Naive thymus-derived CD4-positive, alpha-beta T cell (primary cell): ENCODE measurements at regions of chr10 and their contacts with region 1.

Region 1: DNA sequence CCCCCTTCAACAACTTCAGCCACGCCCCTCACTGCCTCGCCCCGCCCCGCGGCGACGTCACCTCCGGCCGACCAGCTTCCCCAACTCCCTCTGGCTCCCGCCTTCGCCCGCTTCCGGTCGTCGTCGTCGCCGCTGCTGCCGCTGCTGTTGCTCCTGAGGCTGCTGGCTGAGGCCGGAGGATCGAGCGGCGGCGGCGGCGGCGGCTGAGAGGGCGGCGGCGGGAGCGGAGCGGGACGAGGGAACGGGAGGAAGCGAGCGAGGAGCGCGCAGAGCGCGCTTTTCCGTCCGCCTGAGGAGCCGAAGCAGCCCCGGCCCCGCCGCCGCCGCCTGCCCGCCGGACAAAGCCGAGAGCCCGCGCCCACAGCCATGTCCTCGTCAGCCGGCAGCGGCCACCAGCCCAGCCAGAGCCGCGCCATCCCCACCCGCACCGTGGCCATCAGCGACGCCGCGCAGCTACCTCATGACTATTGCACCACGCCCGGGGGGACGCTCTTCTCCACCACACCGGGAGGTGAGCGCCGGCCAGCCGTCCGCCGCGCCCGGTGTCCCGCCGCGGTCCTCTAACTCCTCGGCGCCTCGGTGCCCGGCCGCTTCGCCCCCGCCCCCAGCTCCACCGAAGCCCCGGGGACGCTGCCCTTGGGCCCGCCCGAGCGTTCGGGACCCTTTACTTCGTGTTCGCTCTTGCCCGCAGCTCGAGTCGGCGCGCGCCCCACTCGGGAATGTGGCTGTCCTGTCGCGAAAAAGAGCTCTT is at the start of gene EIF4EBP2:
- DNase-seq: peak; percentile 95 to 100 (median 98)
- ATAC-seq: peak; percentile 98
- H3K4me3 ChIP-seq: peak within 1 kb of the TSS; percentile 82
- H3K4me3 Mint-ChIP-seq: peak within 1 kb of the TSS; percentile 91 to 99 (median 96)
- H3K27ac ChIP-seq: peak within 1 kb of the TSS; percentile 86
- H3K27ac Mint-ChIP-seq: peak within 1 kb of the TSS; percentile 88 to 97 (median 94)
- H3K4me1 ChIP-seq: peaks cover 13 to 24% of the 10 kb centered on the region in 2 donors
- H3K4me1 Mint-ChIP-seq: peaks cover 30 to 53% (median 44%) of the 10 kb centered on the region in 7 donors
- H3K27me3 ChIP-seq: no peaks in the 10 kb centered on the region
- H3K27me3 Mint-ChIP-seq: peaks cover 0 to 3% (median 0%) of the 10 kb centered on the region in 5 donors
- total RNA-seq, gene EIF4EBP2: 33.5 to 52.1 (median 45.2) TPM

Region 2: GRCh38 chr10:69845574-69846292 is 558.5 kb before region 1 on chr10:
- CTCF ChIA-PET with region 1: no interaction called
- POLR2A ChIA-PET with region 1: no interaction called
- intact Hi-C with region 1: no loop called
- DNase-seq: no peak
- ATAC-seq: no peak
- H3K4me3 ChIP-seq: no peak overlapping the region
- H3K4me3 Mint-ChIP-seq: no peak overlapping the region
- H3K27ac ChIP-seq: no peak overlapping the region
- H3K27ac Mint-ChIP-seq: no peak overlapping the region
- H3K4me1 ChIP-seq: no peaks in the 10 kb centered on the region
- H3K4me1 Mint-ChIP-seq: peaks cover 0 to 3% (median 0%) of the 10 kb centered on the region in 7 donors
- H3K27me3 ChIP-seq: no peaks in the 10 kb centered on the region
- H3K27me3 Mint-ChIP-seq: peaks cover 24 to 33% (median 30%) of the 10 kb centered on the region in 5 donors

Region 3: GRCh38 chr10:70093335-70093944 is 310.8 kb before region 1 on chr10:
- CTCF ChIA-PET with region 1: interaction called, 4 read pairs
- POLR2A ChIA-PET with region 1: interaction called, 9 read pairs
- intact Hi-C with region 1: loop called in 1 of 2 experiments (anchors 1 kb)
- DNase-seq: peak in 7 of 9 donors; percentile 28 to 52 (median 42)
- ATAC-seq: peak; percentile 75
- H3K4me3 ChIP-seq: peak overlapping the region; percentile 73
- H3K4me3 Mint-ChIP-seq: peak overlapping the region; percentile 70 to 96 (median 89)
- H3K27ac ChIP-seq: peak overlapping the region; percentile 79
- H3K27ac Mint-ChIP-seq: peak overlapping the region; percentile 77 to 99 (median 93)
- H3K4me1 ChIP-seq: peaks cover 17 to 29% of the 10 kb centered on the region in 2 donors
- H3K4me1 Mint-ChIP-seq: peaks cover 18 to 64% (median 57%) of the 10 kb centered on the region in 7 donors
- H3K27me3 ChIP-seq: no peaks in the 10 kb centered on the region
- H3K27me3 Mint-ChIP-seq: no peaks in the 10 kb centered on the region

Region 4: GRCh38 chr10:70233109-70233938 is 170.9 kb before region 1 on chr10 and contains the start of gene PPA1:
- CTCF ChIA-PET with region 1: no interaction called
- POLR2A ChIA-PET with region 1: interaction called, 11 read pairs
- intact Hi-C with region 1: loop called (anchors 1 kb)
- DNase-seq: peak; percentile 98 to 100 (median 99)
- ATAC-seq: peak; percentile 99
- H3K4me3 ChIP-seq: peak within 1 kb of the TSS; percentile 88
- H3K4me3 Mint-ChIP-seq: peak within 1 kb of the TSS; percentile 74 to 94 (median 87)
- H3K27ac ChIP-seq: peak within 1 kb of the TSS; percentile 84
- H3K27ac Mint-ChIP-seq: peak within 1 kb of the TSS; percentile 79 to 99 (median 92)
- H3K4me1 ChIP-seq: peaks cover 4 to 5% of the 10 kb centered on the region in 2 donors
- H3K4me1 Mint-ChIP-seq: peaks cover 9 to 47% (median 35%) of the 10 kb centered on the region in 7 donors
- H3K27me3 ChIP-seq: no peaks in the 10 kb centered on the region
- H3K27me3 Mint-ChIP-seq: no peaks in the 10 kb centered on the region
- total RNA-seq, gene PPA1: 51.9 to 175 (median 69.6) TPM

Region 5: GRCh38 chr10:70381471-70382421 is 22.5 kb before region 1 on chr10:
- CTCF ChIA-PET with region 1: interaction called, 4 read pairs
- POLR2A ChIA-PET with region 1: interaction called, 4 read pairs
- intact Hi-C with region 1: loop called (anchors 1 kb)
- DNase-seq: peak in 6 of 9 donors; percentile 25 to 53 (median 40)
- ATAC-seq: peak; percentile 43
- H3K4me3 ChIP-seq: peak overlapping the region; percentile 94
- H3K4me3 Mint-ChIP-seq: peak overlapping the region; percentile 82 to 92 (median 90)
- H3K27ac ChIP-seq: peak overlapping the region; percentile 32
- H3K27ac Mint-ChIP-seq: peak overlapping the region in 6 of 9 donors; percentile 17 to 86 (median 46)
- H3K4me1 ChIP-seq: peaks cover 4 to 6% of the 10 kb centered on the region in 2 donors
- H3K4me1 Mint-ChIP-seq: peaks cover 2 to 20% (median 10%) of the 10 kb centered on the region in 7 donors
- H3K27me3 ChIP-seq: no peaks in the 10 kb centered on the region
- H3K27me3 Mint-ChIP-seq: no peaks in the 10 kb centered on the region

Region 6: DNA sequence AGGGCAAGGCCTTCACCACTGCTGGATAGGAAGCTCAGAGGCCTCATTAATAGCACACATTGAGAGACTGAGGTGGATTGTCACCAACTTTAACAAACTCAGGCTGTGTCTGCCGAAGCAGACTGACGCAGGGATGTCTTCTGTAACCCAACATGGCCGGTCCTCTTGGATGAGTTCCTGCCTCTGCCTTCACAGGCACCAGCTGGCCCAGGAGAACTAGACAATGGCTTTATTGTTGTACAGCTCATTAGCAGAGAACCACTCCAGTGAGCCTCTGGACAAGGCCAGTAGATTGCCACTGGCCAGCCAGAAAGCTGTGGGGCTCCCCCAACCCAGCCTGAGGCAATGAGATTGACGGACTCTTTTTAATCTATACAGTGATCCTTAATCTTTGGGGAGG is 27.9 kb after region 1 on chr10:
- CTCF ChIA-PET with region 1: no interaction called
- POLR2A ChIA-PET with region 1: interaction called, 9 read pairs
- intact Hi-C with region 1: loop called in 1 of 2 experiments (anchors 2 kb)
- DNase-seq: no peak
- ATAC-seq: no peak
- H3K4me3 ChIP-seq: no peak overlapping the region
- H3K4me3 Mint-ChIP-seq: peak overlapping the region; percentile 77 to 87 (median 82)
- H3K27ac ChIP-seq: peak overlapping the region; percentile 64
- H3K27ac Mint-ChIP-seq: peak overlapping the region; percentile 55 to 97 (median 85)
- H3K4me1 ChIP-seq: peaks cover 0 to 18% of the 10 kb centered on the region in 2 donors
- H3K4me1 Mint-ChIP-seq: peaks cover 11 to 39% (median 35%) of the 10 kb centered on the region in 7 donors
- H3K27me3 ChIP-seq: no peaks in the 10 kb centered on the region
- H3K27me3 Mint-ChIP-seq: peaks cover 0 to 6% (median 0%) of the 10 kb centered on the region in 5 donors

Region 7: GRCh38 chr10:70880077-70880534 is 475.9 kb after region 1 on chr10:
- CTCF ChIA-PET with region 1: no interaction called
- POLR2A ChIA-PET with region 1: no interaction called
- intact Hi-C with region 1: loop called in 1 of 2 experiments (anchors 10 kb)
- DNase-seq: peak; percentile 39 to 79 (median 65)
- ATAC-seq: peak; percentile 90
- H3K4me3 ChIP-seq: no peak overlapping the region
- H3K4me3 Mint-ChIP-seq: no peak overlapping the region
- H3K27ac ChIP-seq: no peak overlapping the region
- H3K27ac Mint-ChIP-seq: no peak overlapping the region
- H3K4me1 ChIP-seq: no peaks in the 10 kb centered on the region
- H3K4me1 Mint-ChIP-seq: peaks cover 0 to 8% (median 3%) of the 10 kb centered on the region in 7 donors
- H3K27me3 ChIP-seq: no peaks in the 10 kb centered on the region
- H3K27me3 Mint-ChIP-seq: no peaks in the 10 kb centered on the region

Region 8: DNA sequence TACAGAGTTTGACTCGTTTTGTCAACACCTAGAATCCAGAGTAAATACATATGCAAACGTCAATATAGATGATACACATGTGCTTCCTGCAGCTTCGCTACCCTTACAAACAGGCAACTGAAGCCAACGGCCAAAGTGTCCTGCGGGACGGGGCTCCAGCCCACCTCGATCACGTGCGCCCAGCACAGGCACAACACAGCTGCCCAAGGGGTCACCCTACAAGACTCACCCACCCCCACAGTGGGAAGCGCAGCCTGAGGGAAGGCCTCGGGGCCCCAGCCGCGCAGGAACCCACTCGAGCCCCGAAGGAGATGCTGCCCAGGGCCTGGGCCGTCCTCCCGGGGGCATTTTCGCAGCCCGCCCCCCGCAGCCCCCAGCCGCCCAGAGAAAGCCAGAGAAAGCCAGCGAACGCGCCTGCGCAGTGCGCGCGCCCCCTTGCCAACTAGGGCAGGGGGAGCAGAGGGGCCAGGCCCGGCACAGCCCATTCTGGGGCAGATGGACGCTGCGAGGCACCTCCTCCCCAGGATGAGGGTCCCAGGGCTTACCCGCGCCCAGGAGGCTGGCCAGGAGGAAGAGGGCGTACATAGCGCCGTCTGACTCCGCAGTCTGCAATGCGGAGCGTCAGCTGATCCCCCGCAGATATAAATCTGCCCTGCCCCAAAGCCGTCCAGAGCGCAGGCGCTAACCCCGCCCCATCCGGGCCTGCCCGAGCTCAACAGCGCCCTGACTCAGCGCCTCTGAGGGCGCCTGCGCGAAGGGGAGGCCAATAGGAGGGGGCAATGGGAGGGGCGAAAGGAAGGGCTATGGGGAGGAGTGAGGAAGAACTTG is 1446.6 kb after region 1 on chr10 and contains the start of gene PSAP:
- CTCF ChIA-PET with region 1: no interaction called
- POLR2A ChIA-PET with region 1: no interaction called
- intact Hi-C with region 1: loop called in 1 of 2 experiments (anchors 5 kb)
- DNase-seq: peak; percentile 96 to 99 (median 97)
- ATAC-seq: peak; percentile 98
- H3K4me3 ChIP-seq: peak within 1 kb of the TSS; percentile 92
- H3K4me3 Mint-ChIP-seq: peak within 1 kb of the TSS; percentile 91 to 99 (median 96)
- H3K27ac ChIP-seq: peak within 1 kb of the TSS; percentile 79
- H3K27ac Mint-ChIP-seq: peak within 1 kb of the TSS; percentile 79 to 96 (median 86)
- H3K4me1 ChIP-seq: peaks cover 7 to 14% of the 10 kb centered on the region in 2 donors
- H3K4me1 Mint-ChIP-seq: peaks cover 34 to 51% (median 48%) of the 10 kb centered on the region in 7 donors
- H3K27me3 ChIP-seq: no peaks in the 10 kb centered on the region
- H3K27me3 Mint-ChIP-seq: no peaks in the 10 kb centered on the region
- total RNA-seq, gene PSAP: 153 to 1,163 (median 266) TPM